CD14-positive monocyte (primary cell): ENCODE measurements at regions of chr4 and their contacts with region 1.

Region 1: DNA sequence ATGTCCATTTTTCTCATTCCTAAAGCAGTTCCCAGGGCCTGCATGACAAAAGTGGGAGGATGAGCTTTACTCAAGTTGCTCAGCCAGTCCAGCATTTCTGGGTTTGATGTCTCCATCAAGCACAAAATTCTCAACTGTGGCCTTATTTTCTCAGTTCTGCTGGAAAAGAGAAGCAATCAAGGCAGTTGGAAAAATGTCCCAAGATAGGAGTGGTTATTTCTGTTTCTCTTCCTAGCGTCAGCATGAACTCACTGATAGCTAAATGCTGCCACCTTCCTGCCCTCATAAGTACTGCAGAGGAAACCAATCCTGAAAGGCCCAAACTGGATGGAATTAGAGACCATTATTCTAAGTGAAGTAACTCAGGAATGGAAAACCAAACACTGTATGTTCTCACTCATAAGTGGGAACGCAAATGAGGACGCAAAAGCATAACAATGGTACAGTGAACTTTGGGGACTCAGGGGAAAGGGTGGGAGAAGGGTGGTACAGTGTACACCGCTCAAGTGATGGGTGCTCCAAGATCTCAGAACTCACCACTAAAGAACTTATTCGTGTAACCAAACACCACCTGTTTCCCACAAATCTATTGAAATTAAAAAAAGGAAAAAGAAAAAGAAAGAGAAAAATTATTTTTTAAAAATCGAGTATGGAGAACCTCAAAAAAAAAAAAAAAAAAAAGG is 29.6 kb downstream of the ADH7 start:
- DNase-seq: peak; percentile 19 to 44 (median 39)
- H3K4me3 ChIP-seq: no peak overlapping the region
- H3K4me3 Mint-ChIP-seq: no peak overlapping the region
- H3K27ac ChIP-seq: no peak overlapping the region
- H3K27ac Mint-ChIP-seq: peak overlapping the region in 1 of 7 donors; percentile 28
- H3K4me1 ChIP-seq: peaks cover 0 to 9% of the 10 kb centered on the region in 2 donors
- H3K4me1 Mint-ChIP-seq: peaks cover 11% of the 10 kb centered on the region
- H3K27me3 ChIP-seq: no peaks in the 10 kb centered on the region
- H3K27me3 Mint-ChIP-seq: peaks cover 0 to 5% (median 2%) of the 10 kb centered on the region in 3 donors
- CTCF ChIP-seq: peak; percentile 90

Region 2: DNA sequence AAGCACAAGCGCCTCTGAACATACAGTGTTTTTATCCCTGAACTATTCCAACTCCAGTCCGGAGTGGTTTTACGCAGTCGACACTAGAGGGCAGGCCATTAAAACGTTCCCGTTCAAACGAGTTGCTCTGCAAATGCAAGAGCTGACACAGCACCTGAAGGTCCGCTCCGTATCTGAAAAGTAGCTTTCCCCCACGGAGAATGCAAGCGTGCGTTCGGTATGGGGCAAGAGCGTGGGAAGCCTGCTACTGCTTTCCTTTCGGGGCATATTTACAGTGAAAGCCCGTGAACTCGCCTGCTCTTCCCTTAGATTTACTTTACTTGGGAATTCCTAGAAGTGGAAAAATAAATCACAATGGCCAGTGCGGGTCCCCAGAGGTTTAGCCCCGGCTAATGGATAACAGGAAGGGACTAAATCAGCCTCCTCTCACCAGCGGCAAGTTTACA is 937.9 kb before region 1 on chr4:
- intact Hi-C with region 1: loop called in 1 of 2 experiments (anchors 10 kb)
- DNase-seq: peak; percentile 34 to 47 (median 35)
- H3K4me3 ChIP-seq: peak overlapping the region in 1 of 3 experiments; percentile 62
- H3K4me3 Mint-ChIP-seq: peak overlapping the region; percentile 61 to 79
- H3K27ac ChIP-seq: no peak overlapping the region
- H3K27ac Mint-ChIP-seq: peak overlapping the region in 1 of 7 donors; percentile 72
- H3K4me1 ChIP-seq: peaks cover 8 to 11% of the 10 kb centered on the region in 2 donors
- H3K4me1 Mint-ChIP-seq: peaks cover 13% of the 10 kb centered on the region
- H3K27me3 ChIP-seq: no peaks in the 10 kb centered on the region
- H3K27me3 Mint-ChIP-seq: peaks cover 0 to 7% (median 0%) of the 10 kb centered on the region in 3 donors
- CTCF ChIP-seq: peak; percentile 70